GM10248 (cell line): ENCODE measurements at regions of chr1 and their contacts with region 1.

Region 1: GRCh38 chr1:15678578-15678977 is 5.5 kb upstream of the PLEKHM2 start:
- DNase-seq: no peak
- CTCF ChIP-seq: no peak

Region 2: GRCh38 chr1:15578921-15579682 is 99.5 kb before region 1 on chr1:
- CTCF ChIA-PET with region 1: no interaction called
- POLR2A ChIA-PET with region 1: no interaction called
- DNase-seq: peak; percentile 57
- CTCF ChIP-seq: no peak

Region 3: DNA sequence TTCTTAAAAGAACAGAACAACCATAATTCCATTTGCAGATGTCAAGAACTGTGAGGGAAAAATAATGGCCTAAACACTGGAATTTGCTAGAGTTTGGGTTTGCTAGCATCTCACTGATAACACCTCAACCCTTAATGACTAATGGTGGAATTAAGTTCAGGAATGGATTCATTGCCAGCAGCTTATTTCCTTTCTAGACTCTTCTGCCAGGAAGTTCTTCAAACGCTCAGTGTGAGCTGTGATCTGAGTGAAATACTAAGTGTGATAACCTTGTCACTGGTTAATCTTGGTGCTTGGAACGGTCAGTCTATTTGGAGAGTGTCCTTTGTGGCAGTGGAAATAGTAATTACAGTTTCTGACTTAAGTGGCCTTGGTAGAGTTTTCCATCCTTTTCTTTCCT is 16.1 kb before region 1 on chr1:
- CTCF ChIA-PET with region 1: interaction called, 11 read pairs
- POLR2A ChIA-PET with region 1: interaction called, 8 read pairs
- DNase-seq: no peak
- CTCF ChIP-seq: no peak